Activated CD4-positive, alpha-beta T cell treated with anti-CD3 and anti-CD28 coated beads for 36 hours (primary cell): ENCODE measurements at regions of chr17 and their contacts with region 1.

Region 1: DNA sequence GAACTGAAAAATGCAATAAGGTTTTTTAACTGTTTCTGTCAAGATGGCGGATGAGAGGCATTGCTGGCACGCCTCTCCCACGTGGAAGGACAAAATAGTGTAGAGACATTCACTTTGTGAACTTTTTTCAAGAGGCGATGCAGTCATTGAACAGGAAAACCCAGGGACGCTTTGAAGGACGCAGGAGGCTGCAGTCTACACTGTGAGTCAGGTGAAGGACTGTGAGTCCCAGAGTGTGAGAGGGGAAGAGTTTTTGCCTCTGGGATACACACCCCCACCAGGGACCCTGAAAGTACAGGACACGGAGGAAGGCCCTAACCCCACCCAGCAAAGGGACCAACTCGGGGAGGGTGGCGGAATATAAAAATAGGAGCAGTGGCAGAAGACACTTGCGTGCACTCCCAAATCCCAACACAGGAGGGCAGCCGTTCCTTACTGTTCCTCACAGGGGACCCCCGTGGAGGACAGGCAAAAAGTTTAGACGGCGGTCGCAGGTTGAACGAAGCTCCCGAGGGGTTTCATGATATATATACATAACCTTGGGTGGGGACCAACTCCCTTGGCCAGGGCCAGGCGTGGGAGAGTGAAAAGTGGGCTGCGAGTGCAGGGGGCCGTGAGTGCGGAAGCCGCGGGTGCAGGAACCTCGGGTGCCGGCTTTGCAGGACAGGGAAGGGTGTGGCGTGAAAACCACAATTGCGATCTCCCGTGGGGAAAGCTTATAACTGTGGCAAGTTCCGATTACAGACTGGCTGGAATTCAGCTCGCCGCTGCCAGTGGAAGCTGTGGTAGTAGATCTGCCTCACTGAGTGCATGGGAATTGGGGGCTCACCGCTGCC is 82.0 kb upstream of the ALOX12 start:
- DNase-seq: peak; percentile 87
- ATAC-seq: peak; percentile 80
- H3K4me3 Mint-ChIP-seq: peak overlapping the region; percentile 62
- H3K27ac Mint-ChIP-seq: no peak overlapping the region
- H3K4me1 Mint-ChIP-seq: peaks cover 22% of the 10 kb centered on the region
- H3K27me3 Mint-ChIP-seq: peaks cover 2% of the 10 kb centered on the region

Region 2: DNA sequence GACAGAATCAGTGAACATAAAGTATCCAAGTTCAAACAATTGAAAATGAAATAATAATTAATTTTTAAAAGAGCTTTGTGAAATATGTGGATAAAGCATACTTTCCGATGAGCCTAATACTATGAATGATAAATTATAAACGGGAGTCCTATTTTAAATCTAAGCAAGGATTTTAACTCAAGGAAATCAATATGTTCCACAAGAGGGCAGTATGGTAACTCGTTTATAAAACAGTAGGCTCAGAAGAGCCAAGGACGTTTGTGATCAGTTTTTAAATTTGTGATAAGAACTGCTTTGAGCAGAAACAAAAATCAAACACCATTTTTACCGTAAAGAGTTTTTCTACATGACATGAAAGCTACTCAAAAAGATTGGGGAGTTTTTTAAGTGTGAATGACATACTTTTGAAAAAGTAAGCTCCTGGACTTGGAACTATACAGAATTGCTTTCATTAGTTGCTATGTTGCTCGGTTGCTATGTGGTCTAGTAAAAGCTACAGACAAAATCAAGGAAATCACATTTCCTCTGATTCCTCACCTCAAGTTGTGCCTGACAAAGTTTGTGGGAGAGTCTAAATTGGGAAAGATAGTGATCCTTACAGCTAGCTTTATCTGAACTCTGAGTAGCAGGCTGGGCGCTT is 70.5 kb before region 1 on chr17:
- CTCF ChIA-PET with region 1: interaction called, 11 read pairs
- POLR2A ChIA-PET with region 1: no interaction called
- intact Hi-C with region 1: loop called in 1 of 2 experiments (anchors 5 kb)
- DNase-seq: no peak
- ATAC-seq: peak; percentile 51
- H3K4me3 Mint-ChIP-seq: no peak overlapping the region
- H3K27ac Mint-ChIP-seq: no peak overlapping the region
- H3K4me1 Mint-ChIP-seq: peaks cover 2% of the 10 kb centered on the region
- H3K27me3 Mint-ChIP-seq: peaks cover 26% of the 10 kb centered on the region

Region 3: GRCh38 chr17:6903326-6903900 is 10.4 kb before region 1 on chr17:
- CTCF ChIA-PET with region 1: interaction called, 14 read pairs
- POLR2A ChIA-PET with region 1: no interaction called
- intact Hi-C with region 1: no loop called
- DNase-seq: no peak
- ATAC-seq: no peak
- H3K4me3 Mint-ChIP-seq: no peak overlapping the region
- H3K27ac Mint-ChIP-seq: no peak overlapping the region
- H3K4me1 Mint-ChIP-seq: no peaks in the 10 kb centered on the region
- H3K27me3 Mint-ChIP-seq: no peaks in the 10 kb centered on the region

Region 4: GRCh38 chr17:6936370-6937028 is 22.7 kb after region 1 on chr17:
- CTCF ChIA-PET with region 1: interaction called, 14 read pairs
- POLR2A ChIA-PET with region 1: no interaction called
- intact Hi-C with region 1: no loop called
- DNase-seq: peak; percentile 17
- ATAC-seq: peak; percentile 53
- H3K4me3 Mint-ChIP-seq: peak overlapping the region; percentile 44
- H3K27ac Mint-ChIP-seq: no peak overlapping the region
- H3K4me1 Mint-ChIP-seq: peaks cover 8% of the 10 kb centered on the region
- H3K27me3 Mint-ChIP-seq: no peaks in the 10 kb centered on the region

Region 5: GRCh38 chr17:7004398-7005253 is 90.8 kb after region 1 on chr17:
- CTCF ChIA-PET with region 1: interaction called, 157 read pairs
- POLR2A ChIA-PET with region 1: interaction called, 4 read pairs
- intact Hi-C with region 1: loop called (anchors 1 kb)
- DNase-seq: peak; percentile 37
- ATAC-seq: peak; percentile 99
- H3K4me3 Mint-ChIP-seq: no peak overlapping the region
- H3K27ac Mint-ChIP-seq: no peak overlapping the region
- H3K4me1 Mint-ChIP-seq: peaks cover 20% of the 10 kb centered on the region
- H3K27me3 Mint-ChIP-seq: no peaks in the 10 kb centered on the region

Region 6: GRCh38 chr17:7045909-7046724 is 132.3 kb after region 1 on chr17:
- CTCF ChIA-PET with region 1: interaction called, 10 read pairs
- POLR2A ChIA-PET with region 1: no interaction called
- intact Hi-C with region 1: no loop called
- DNase-seq: peak; percentile 66
- ATAC-seq: peak; percentile 34
- H3K4me3 Mint-ChIP-seq: peak overlapping the region; percentile 68
- H3K27ac Mint-ChIP-seq: peak overlapping the region; percentile 59
- H3K4me1 Mint-ChIP-seq: peaks cover 37% of the 10 kb centered on the region
- H3K27me3 Mint-ChIP-seq: peaks cover 3% of the 10 kb centered on the region

Region 7: GRCh38 chr17:7177196-7177953 is 263.5 kb after region 1 on chr17:
- CTCF ChIA-PET with region 1: interaction called, 4 read pairs
- POLR2A ChIA-PET with region 1: no interaction called
- intact Hi-C with region 1: loop called in 1 of 2 experiments (anchors 5 kb)
- DNase-seq: peak; percentile 82
- ATAC-seq: peak; percentile 82
- H3K4me3 Mint-ChIP-seq: peak overlapping the region; percentile 56
- H3K27ac Mint-ChIP-seq: no peak overlapping the region
- H3K4me1 Mint-ChIP-seq: peaks cover 11% of the 10 kb centered on the region
- H3K27me3 Mint-ChIP-seq: peaks cover 11% of the 10 kb centered on the region

Region 8: GRCh38 chr17:7219812-7220581 is 306.2 kb after region 1 on chr17 and contains the starts of genes ACADVL and DLG4:
- CTCF ChIA-PET with region 1: no interaction called
- POLR2A ChIA-PET with region 1: no interaction called
- intact Hi-C with region 1: no loop called
- DNase-seq: peak; percentile 94
- ATAC-seq: peak; percentile 73
- H3K4me3 Mint-ChIP-seq: peak within 1 kb of the TSS; percentile 89
- H3K27ac Mint-ChIP-seq: peak within 1 kb of the TSS; percentile 96
- H3K4me1 Mint-ChIP-seq: peaks cover 48% of the 10 kb centered on the region
- H3K27me3 Mint-ChIP-seq: no peaks in the 10 kb centered on the region
- total RNA-seq, gene ACADVL: 263 to 345 TPM
- total RNA-seq, gene DLG4: 11.7 to 15.4 TPM